ENCODE measurements at regions of chr18 and their contacts with region 1.

Region 1: DNA sequence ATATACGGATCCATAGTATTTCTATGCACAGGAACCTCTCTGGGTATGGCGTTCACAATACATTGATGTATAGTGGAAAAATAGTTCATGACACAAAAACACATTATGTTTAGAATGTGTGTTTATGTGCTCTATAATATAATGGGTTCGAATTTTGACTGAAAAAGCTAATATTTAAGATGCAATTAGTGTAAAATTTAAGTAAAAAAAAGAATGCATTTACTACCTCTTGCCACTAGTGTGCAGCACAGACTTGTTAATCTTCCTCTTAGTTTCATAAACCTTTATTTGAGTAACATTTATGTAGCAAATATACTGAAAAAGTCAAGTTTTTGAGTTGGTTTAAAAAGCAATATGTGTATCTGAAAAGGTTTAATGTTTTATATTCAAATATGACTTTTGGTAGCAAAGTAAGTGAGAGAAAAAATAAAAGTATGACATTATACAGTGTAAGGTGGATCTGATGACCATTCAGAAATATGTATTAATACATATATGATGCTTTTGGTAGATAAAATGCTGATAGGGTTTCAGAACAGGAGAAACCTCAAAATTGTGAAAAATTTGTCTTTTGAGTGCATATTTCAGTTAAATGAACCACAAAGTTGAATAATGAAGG is 49.4 kb downstream of the CCDC102B start:
- H3K4me3 Mint-ChIP-seq: no peak overlapping the region
- H3K27ac Mint-ChIP-seq: no peak overlapping the region
- H3K4me1 Mint-ChIP-seq: no peaks in the 10 kb centered on the region
- H3K27me3 Mint-ChIP-seq: no peaks in the 10 kb centered on the region

Region 2: DNA sequence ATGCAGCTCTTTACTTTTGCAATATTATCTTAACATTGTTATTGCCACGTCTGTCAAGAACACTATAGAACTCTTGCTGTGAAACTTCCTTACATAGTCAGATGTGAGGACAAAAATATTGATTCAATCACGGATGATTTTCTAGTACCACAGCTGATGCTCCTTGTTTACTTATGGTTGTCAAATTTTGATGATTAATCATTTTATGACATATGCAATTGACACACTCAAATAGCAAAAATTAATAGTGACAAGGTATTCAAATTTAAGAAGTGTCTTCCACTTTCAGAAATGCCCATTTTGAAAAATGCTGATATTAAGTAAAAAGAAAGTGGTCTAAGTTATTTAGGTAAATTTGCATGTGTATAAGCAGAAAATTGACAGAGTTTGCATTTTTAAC is 234.5 kb after region 1 on chr18:
- intact Hi-C with region 1: no loop called
- H3K4me3 Mint-ChIP-seq: no peak overlapping the region
- H3K27ac Mint-ChIP-seq: no peak overlapping the region
- H3K4me1 Mint-ChIP-seq: no peaks in the 10 kb centered on the region
- H3K27me3 Mint-ChIP-seq: no peaks in the 10 kb centered on the region

Region 3: DNA sequence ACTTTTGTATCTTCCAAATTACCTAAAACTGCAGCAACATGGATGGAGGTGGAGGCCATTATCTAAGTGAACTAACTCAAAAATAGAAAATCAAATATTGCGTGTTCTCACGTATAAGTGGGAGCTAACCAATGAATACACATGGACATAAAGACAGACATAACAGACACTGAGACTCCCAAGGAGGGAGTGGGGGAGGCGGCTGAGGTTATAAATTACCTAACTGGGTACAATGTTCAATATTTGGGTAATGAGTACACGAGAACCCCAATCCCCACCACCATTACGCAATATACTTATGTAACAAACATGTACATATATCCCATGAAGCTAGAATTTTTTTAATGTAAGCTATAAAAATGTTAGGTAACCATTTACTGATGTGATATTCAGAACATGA is 1238.3 kb after region 1 on chr18:
- intact Hi-C with region 1: loop called (anchors 2 kb)
- H3K4me3 Mint-ChIP-seq: no peak overlapping the region
- H3K27ac Mint-ChIP-seq: no peak overlapping the region
- H3K4me1 Mint-ChIP-seq: no peaks in the 10 kb centered on the region
- H3K27me3 Mint-ChIP-seq: no peaks in the 10 kb centered on the region

Measured in dendritic cell treated with granulocyte-macrophage colony-stimulating factor and Interleukin-4, amounts not matched to agents 40 ng/mL and 50 ng/mL, for 4 days (primary cell).